Activated T-helper 1 cell treated with anti-CD3 and anti-CD28 coated beads, Interleukin-12 subunit alpha, Interleukin-12 subunit beta, Interleukin-2, Interleukin-4 antibody, amounts not matched to agents 30 ng/mL and 10 ng/mL and 1 ng/mL, durations not matched to agents 14 hours and 24 hours and 36 hours (primary cell): ENCODE measurements at regions of chr1 and their contacts with region 1.

Region 1: DNA sequence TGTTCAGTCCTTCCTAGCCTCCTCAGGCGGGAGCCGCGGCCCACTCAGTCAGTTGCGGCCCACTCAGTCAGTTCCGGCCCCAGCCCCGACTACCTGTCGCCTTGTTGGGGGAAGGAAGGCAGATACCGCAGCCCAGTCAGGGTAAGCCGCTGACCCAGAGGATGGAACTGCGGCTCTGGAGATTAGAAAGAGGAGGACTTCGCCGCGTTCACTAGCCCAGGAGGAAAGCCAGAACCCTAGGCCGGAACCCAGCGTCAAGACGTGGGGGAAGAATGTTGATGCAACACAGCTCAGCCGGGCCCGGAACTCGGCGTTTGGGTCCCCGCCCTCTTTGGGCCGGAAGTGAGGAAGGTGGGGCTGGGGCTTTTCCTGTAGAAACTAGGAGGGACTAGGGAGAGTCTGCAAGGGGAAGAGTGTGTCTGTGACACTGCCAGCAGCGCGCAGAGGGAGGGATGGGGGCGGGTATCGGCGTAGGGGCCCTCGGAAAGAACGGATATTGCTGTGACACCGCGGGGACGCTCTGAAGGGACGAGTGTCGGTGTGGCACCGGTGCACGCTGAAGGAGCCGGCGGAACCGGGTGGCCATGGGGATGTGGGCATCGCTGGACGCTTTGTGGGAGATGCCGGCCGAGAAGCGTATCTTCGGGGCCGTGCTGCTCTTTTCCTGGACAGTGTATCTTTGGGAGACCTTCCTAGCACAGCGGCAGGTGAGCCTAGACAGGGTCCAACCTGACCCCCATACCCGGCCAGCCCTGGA is at the start of gene ZMPSTE24:
- DNase-seq: peak; percentile 94
- H3K4me3 Mint-ChIP-seq: peak within 1 kb of the TSS; percentile 96
- H3K27ac Mint-ChIP-seq: peak within 1 kb of the TSS; percentile 99
- H3K4me1 Mint-ChIP-seq: peaks cover 55% of the 10 kb centered on the region
- H3K27me3 Mint-ChIP-seq: no peaks in the 10 kb centered on the region
- total RNA-seq, gene ZMPSTE24: 50.2 and 56.0 TPM in 2 replicates

Region 2: DNA sequence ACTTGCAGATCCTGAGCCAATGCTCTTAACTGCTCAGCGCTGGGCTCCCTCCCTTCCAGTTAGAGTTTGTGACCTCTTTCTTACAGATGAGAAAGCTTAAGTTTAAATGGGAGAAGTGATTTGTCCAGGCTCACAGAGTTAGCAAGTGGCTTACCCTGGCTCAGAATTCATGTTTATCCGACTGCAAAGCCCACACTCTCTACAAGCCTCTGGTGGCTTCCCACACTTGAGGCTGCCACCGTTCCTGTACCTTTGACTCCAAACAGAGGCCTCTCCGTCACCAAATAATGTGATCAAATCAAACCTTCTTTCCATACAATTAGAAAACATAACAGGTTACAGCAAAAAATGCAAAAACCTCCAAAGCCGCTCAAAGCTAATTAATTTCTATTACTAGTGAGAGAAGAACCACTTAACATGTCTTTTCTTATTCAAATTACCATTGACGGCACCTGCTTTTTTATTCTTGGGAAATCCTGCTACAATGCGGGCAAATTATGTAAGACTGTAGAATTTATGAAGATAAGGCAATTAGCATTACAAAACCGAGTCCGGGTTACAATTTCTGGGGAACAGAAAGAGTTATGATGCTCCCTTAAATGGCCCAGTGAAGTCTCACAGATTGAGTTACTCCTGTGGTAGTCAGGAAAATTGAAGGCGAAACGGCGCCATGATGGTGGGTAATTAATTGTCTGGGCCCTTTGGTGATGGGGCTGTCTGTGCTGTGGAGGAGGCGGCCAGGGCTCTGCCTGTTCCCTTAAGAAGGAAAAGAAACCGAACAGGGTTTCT is 1887.0 kb before region 1 on chr1:
- intact Hi-C with region 1: no loop called
- DNase-seq: no peak
- H3K4me3 Mint-ChIP-seq: no peak overlapping the region
- H3K27ac Mint-ChIP-seq: no peak overlapping the region
- H3K4me1 Mint-ChIP-seq: no peaks in the 10 kb centered on the region
- H3K27me3 Mint-ChIP-seq: peaks cover 7% of the 10 kb centered on the region

Region 3: GRCh38 chr1:40040511-40041465 is 217.1 kb before region 1 on chr1 and contains the start of gene CAP1:
- intact Hi-C with region 1: loop called (anchors 1 kb)
- DNase-seq: peak; percentile 100
- H3K4me3 Mint-ChIP-seq: peak within 1 kb of the TSS; percentile 97
- H3K27ac Mint-ChIP-seq: peak within 1 kb of the TSS; percentile 99
- H3K4me1 Mint-ChIP-seq: peaks cover 70% of the 10 kb centered on the region
- H3K27me3 Mint-ChIP-seq: no peaks in the 10 kb centered on the region
- total RNA-seq, gene CAP1: 421 and 435 TPM in 2 replicates

Region 4: GRCh38 chr1:40161125-40161887 is 96.6 kb before region 1 on chr1 and contains the start of gene RLF:
- intact Hi-C with region 1: loop called (anchors 1 kb)
- DNase-seq: peak; percentile 94
- H3K4me3 Mint-ChIP-seq: no peak within 1 kb of the TSS
- H3K27ac Mint-ChIP-seq: no peak within 1 kb of the TSS
- H3K4me1 Mint-ChIP-seq: peaks cover 6% of the 10 kb centered on the region
- H3K27me3 Mint-ChIP-seq: no peaks in the 10 kb centered on the region
- total RNA-seq, gene RLF: 18.2 and 19.9 TPM in 2 replicates

Region 5: DNA sequence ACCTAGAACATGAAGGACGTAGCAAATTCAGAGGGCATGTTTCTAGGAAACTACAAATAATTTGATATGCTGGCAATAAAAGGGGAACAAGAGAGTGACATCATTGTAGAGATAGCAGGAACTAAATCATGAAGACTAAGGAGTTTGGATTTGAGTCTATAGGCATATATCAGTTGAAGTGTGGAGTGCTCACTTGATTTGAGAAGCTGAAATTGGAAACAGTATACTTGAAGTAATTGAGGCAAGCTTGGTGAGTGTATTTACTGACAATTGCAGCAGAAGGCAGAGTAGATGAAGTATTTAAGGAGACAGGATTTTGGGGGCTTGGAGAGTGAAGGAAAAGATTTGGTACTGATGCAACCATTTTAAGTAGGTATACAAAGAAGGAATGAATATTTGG is 16.5 kb before region 1 on chr1:
- intact Hi-C with region 1: loop called (anchors 1 kb)
- DNase-seq: no peak
- H3K4me3 Mint-ChIP-seq: peak overlapping the region; percentile 23
- H3K27ac Mint-ChIP-seq: peak overlapping the region; percentile 94
- H3K4me1 Mint-ChIP-seq: peaks cover 77% of the 10 kb centered on the region
- H3K27me3 Mint-ChIP-seq: no peaks in the 10 kb centered on the region

Region 6: GRCh38 chr1:40338745-40339424 is 81.0 kb after region 1 on chr1:
- intact Hi-C with region 1: loop called (anchors 2 kb)
- DNase-seq: peak; percentile 84
- H3K4me3 Mint-ChIP-seq: peak overlapping the region; percentile 38
- H3K27ac Mint-ChIP-seq: peak overlapping the region; percentile 75
- H3K4me1 Mint-ChIP-seq: peaks cover 53% of the 10 kb centered on the region
- H3K27me3 Mint-ChIP-seq: no peaks in the 10 kb centered on the region

Region 7: DNA sequence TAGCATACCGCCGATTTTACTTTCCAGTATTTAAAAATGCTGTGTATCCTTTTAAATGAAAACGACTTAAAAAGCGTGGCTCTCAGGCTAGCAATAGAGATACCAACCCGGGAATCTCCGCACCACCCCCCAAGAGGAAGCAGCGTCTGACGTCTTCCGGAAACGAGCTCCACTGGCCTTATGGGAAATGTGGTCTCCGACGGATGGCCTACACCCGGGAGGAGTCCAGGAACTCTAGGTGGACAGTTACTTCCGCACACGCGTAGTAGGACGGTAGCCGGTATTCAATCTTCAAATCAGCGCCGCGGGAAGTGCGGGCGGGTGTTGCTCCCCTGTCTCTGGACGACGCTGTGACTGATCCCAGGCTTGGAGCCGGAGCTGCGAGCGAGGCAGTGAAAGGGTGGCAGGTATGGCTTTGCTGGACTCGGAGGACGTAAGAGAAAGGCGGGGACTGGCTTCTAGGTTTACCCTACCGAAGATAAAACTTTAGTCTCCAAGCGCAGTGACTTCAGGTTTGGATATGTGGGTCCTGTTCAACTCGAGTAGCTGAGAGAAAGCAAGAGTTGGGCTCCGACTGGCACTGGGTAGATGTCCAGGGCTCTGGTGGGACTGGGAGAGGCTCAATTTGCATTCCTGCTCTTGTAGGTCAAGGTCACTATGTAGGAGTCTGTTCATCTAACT is 273.7 kb after region 1 on chr1 and contains the start of gene ZNF684:
- intact Hi-C with region 1: loop called (anchors 1 kb)
- DNase-seq: peak; percentile 83
- H3K4me3 Mint-ChIP-seq: peak within 1 kb of the TSS; percentile 97
- H3K27ac Mint-ChIP-seq: peak within 1 kb of the TSS; percentile 88
- H3K4me1 Mint-ChIP-seq: peaks cover 26% of the 10 kb centered on the region
- H3K27me3 Mint-ChIP-seq: peaks cover 2% of the 10 kb centered on the region
- total RNA-seq, gene ZNF684: 4.9 and 6.0 TPM in 2 replicates